ENCODE measurements at regions of chr3 and their contacts with region 1.

Region 1: DNA sequence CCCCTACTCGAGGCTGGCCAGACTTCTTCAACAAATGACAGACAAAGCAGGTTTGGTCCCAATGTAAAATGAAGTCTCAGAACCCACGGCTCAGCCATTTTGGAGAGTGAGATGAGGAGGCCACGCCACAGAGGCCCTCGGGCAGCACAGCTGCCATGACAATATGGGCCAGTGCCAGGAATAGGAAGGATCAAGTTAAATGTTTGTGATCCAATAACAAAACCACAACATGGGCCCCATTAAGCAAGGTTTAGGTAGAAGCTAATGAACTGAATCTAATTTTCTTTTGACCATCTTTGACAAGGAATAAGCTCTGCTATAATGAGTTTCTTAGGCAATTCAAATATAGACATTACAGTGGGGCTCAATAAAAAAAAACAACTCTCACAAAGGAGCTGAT is 52.6 kb downstream of the RFTN1 start:
- DNase-seq: no peak
- H3K4me3 ChIP-seq: no peak overlapping the region
- H3K27me3 ChIP-seq: no peaks in the 10 kb centered on the region
- CTCF ChIP-seq: no peak

Region 2: DNA sequence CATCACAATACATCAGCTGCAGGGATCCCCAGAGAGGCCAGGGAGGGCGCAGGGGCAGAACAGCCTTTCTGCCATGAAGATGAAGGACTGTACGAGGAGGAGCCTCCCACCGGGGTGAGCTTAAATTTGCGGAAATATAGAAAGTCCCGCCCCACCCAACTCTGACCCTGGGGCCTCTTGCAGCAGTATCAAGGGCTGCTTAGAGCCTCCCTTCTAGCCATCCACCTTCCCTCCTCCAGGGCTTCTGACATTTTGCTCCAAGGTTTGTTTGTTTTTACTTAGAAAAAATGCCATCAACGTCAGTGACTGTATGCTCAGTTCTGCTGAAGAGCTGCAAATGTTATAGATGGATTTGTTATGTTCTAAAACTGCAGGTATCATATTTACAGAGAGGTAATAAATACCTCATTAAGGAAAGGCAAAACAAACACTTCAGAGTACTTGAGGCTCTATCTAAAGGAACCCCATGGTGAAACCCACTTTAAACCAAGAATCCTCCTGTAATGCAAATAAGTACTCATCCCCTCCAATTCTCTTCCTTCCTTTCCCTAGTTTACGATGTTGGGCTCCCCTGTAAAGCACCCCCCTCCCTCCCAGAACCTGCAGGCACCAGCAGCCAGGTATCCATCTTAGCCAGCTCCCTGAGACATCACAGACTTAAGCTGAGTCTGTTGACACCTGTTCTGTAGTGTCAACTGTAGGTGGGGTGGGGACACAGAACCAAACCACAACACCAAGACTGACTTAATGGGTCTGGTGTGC is 22.1 kb after region 1 on chr3:
- CTCF ChIA-PET with region 1: no interaction called
- POLR2A ChIA-PET with region 1: no interaction called
- DNase-seq: no peak
- H3K4me3 ChIP-seq: no peak overlapping the region
- H3K27me3 ChIP-seq: no peaks in the 10 kb centered on the region
- CTCF ChIP-seq: no peak

Region 3: GRCh38 chr3:16494094-16494493 is 33.2 kb after region 1 on chr3:
- CTCF ChIA-PET with region 1: interaction called, 3 read pairs
- POLR2A ChIA-PET with region 1: interaction called, 17 read pairs
- DNase-seq: no peak
- H3K4me3 ChIP-seq: no peak overlapping the region
- H3K27me3 ChIP-seq: no peaks in the 10 kb centered on the region
- CTCF ChIP-seq: no peak

Region 4: GRCh38 chr3:16600780-16601539 is 140.1 kb after region 1 on chr3:
- CTCF ChIA-PET with region 1: no interaction called
- POLR2A ChIA-PET with region 1: no interaction called
- DNase-seq: peak; percentile 15
- H3K4me3 ChIP-seq: no peak overlapping the region
- H3K27me3 ChIP-seq: no peaks in the 10 kb centered on the region; the same call in 1 of the 2 replicates
- CTCF ChIP-seq: peak; percentile 72

Region 5: DNA sequence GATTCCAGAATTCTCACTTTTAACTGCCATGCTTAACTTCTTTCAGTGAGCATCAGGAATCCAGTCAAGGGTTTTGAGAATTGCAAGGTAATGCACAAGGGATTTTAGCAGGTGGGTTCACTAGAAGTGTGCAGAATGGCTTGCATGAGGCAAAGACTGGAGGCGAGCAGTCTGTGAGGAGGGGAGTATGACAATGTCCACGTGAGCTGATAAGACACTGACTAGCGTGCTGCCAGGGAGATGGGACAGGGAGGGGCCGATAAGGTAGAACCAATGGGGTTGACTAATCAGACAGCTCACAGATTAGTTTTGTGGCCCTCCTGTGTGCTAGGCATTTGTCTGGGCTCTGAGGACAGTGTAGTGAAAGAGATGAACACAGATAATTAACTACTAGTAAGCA is 246.4 kb after region 1 on chr3:
- CTCF ChIA-PET with region 1: no interaction called
- POLR2A ChIA-PET with region 1: no interaction called
- DNase-seq: no peak
- H3K4me3 ChIP-seq: no peak overlapping the region
- H3K27me3 ChIP-seq: no peaks in the 10 kb centered on the region
- CTCF ChIP-seq: no peak